ENCODE measurements at regions of chr1 and their contacts with region 1.

Region 1: DNA sequence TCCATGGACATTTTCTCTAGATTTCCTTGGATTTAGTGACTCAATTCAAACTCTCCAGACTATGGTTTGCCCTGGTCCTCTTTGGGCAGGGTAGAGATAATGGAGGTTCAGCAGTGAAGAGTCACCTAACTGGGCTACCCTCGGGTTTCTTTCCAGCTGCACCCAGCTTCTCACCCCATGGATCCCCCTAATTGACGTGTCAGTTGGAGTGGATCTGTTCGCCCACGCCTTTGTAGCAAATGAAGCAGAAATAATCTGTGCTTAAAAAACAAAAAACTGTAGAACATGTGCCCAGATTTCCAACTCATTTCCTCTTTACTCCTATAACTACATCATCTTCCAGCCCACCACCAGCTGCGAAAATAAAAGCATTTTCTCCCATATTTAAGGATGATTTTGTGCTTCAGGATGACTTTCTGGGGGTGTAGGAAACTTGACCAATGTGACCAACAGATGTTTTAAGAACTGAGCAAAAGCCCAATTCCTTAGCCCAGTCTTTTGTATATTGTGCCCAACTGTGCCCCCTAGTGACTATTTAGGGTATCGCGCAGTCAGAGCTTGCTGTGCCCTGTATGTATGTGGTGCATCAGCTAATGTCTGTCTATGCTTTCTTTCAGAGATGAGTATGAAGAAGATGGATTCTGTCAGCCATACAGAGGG is 66.5 kb upstream of the UBE2U start:
- DNase-seq: peak; percentile 82
- H3K4me3 Mint-ChIP-seq: no peak overlapping the region
- H3K27ac Mint-ChIP-seq: no peak overlapping the region
- H3K4me1 Mint-ChIP-seq: peaks cover 20% of the 10 kb centered on the region
- H3K27me3 Mint-ChIP-seq: no peaks in the 10 kb centered on the region
- CTCF ChIP-seq: peak; percentile 86

Region 2: DNA sequence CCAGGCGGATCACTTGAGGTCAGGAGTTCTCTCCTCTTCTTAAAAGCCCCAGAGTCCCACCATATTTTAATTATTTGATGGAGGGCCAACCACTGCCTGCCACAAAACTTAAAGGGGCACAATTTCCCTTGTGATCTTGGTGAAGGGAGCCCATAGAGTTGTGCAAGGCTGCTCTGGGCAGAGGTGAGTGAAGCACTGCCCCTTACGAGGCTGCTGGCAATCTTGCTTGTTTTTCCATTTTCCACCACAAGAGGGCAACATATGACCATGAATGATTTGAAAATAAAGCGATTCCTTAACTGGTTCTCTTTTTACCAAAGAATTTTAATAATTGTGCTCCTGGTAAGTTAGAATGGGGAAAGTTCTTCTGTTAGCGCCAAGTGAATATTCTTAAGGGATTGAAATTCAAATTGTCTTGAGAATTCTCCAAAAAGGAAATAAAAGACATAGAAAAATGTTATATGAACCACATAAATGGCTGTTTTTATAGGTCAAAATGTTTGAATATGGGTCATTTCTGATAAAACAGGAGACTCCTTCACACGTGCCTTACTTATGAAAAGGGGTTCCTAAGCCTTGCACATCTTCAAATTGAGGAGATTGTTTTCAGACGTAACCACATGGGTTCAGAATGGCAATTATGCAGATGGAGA is 521.0 kb before region 1 on chr1:
- CTCF ChIA-PET with region 1: no interaction called
- intact Hi-C with region 1: loop called (anchors 2 kb)
- DNase-seq: peak; percentile 79
- H3K4me3 Mint-ChIP-seq: no peak overlapping the region
- H3K27ac Mint-ChIP-seq: no peak overlapping the region
- H3K4me1 Mint-ChIP-seq: peaks cover 49% of the 10 kb centered on the region
- H3K27me3 Mint-ChIP-seq: no peaks in the 10 kb centered on the region
- CTCF ChIP-seq: peak; percentile 87

Region 3: GRCh38 chr1:63861052-63861691 is 275.7 kb before region 1 on chr1:
- CTCF ChIA-PET with region 1: no interaction called
- intact Hi-C with region 1: no loop called
- DNase-seq: no peak
- H3K4me3 Mint-ChIP-seq: no peak overlapping the region
- H3K27ac Mint-ChIP-seq: no peak overlapping the region
- H3K4me1 Mint-ChIP-seq: peaks cover 19% of the 10 kb centered on the region
- H3K27me3 Mint-ChIP-seq: no peaks in the 10 kb centered on the region
- CTCF ChIP-seq: no peak

Region 4: GRCh38 chr1:63935143-63935542 is 201.7 kb before region 1 on chr1:
- CTCF ChIA-PET with region 1: interaction called, 33 read pairs
- intact Hi-C with region 1: loop called (anchors 1 kb)
- DNase-seq: peak; percentile 53
- H3K4me3 Mint-ChIP-seq: no peak overlapping the region
- H3K27ac Mint-ChIP-seq: peak overlapping the region; percentile 30
- H3K4me1 Mint-ChIP-seq: peaks cover 51% of the 10 kb centered on the region
- H3K27me3 Mint-ChIP-seq: no peaks in the 10 kb centered on the region
- CTCF ChIP-seq: peak; percentile 39

Region 5: DNA sequence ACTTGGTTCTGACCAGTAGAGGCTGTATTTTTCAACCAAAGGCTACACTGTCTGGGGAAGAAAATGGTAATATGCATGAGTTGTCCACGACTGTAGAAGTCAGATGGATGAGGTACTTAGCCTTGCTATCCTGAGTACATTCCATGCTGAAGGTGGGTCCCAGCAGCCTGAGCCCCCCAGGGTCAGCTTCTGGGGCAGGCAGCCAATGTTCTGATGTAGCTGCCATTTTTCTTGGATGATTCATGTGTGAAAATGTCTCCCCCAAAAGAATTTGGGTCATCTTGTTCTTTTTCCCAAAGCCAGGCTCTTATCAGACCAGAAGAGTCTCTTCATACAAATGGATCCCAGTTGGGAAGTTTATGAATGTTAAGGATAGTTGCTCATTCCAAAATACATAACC is 105.6 kb before region 1 on chr1:
- CTCF ChIA-PET with region 1: no interaction called
- intact Hi-C with region 1: no loop called
- DNase-seq: no peak
- H3K4me3 Mint-ChIP-seq: no peak overlapping the region
- H3K27ac Mint-ChIP-seq: no peak overlapping the region
- H3K4me1 Mint-ChIP-seq: no peaks in the 10 kb centered on the region
- H3K27me3 Mint-ChIP-seq: no peaks in the 10 kb centered on the region
- CTCF ChIP-seq: no peak

Region 6: DNA sequence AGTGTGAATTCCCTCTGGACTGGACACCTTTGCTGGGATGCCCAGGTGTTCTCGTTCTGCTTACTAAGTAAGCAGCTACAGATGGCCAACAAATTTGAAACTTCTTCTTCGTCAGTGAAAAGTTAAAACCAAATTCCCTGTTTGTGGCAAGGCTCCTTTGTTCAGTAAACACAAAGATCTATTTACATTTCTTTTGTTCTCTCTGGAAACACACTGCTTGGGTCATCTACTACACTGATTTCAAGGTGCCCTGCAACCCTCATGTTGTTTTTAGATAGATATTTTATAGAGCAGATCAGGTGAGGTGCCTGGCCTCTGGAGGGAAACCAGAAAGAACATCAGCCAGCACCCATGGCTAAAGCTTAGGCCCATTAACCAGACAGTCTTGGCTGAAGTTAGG is 90.6 kb before region 1 on chr1:
- CTCF ChIA-PET with region 1: no interaction called
- intact Hi-C with region 1: no loop called
- DNase-seq: no peak
- H3K4me3 Mint-ChIP-seq: no peak overlapping the region
- H3K27ac Mint-ChIP-seq: no peak overlapping the region
- H3K4me1 Mint-ChIP-seq: peaks cover 25% of the 10 kb centered on the region
- H3K27me3 Mint-ChIP-seq: no peaks in the 10 kb centered on the region
- CTCF ChIP-seq: no peak